ENCODE measurements at regions of chr22 and their contacts with region 1.

Region 1: GRCh38 chr22:39773976-39774539 is 119.5 kb downstream of the ENTHD1 start:
- DNase-seq: peak; percentile 50
- H3K4me3 Mint-ChIP-seq: no peak overlapping the region
- H3K27ac Mint-ChIP-seq: no peak overlapping the region
- H3K4me1 Mint-ChIP-seq: peaks cover 24% of the 10 kb centered on the region
- H3K27me3 Mint-ChIP-seq: no peaks in the 10 kb centered on the region

Region 2: DNA sequence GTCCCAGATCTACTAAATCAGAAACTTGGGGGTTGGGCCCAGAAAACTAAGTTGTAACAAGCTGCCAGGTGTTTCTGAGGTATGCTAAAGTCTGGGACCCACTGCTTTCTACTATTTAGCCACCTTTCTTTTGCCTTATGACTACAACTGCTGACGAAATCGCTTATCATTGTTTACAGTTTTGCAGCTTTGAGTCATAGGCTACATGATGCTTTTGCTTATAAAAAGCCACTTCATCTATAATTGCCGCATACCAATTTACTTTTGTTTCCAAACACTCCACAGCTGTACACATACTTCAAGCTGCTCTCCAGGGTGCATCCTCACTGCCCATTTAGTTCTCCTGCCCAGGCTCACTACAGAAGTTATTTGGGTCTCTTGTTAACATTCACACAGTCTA is 25.2 kb before region 1 on chr22:
- CTCF ChIA-PET with region 1: no interaction called
- POLR2A ChIA-PET with region 1: no interaction called
- intact Hi-C with region 1: loop called (anchors 2 kb)
- DNase-seq: no peak
- H3K4me3 Mint-ChIP-seq: no peak overlapping the region
- H3K27ac Mint-ChIP-seq: no peak overlapping the region
- H3K4me1 Mint-ChIP-seq: peaks cover 22% of the 10 kb centered on the region
- H3K27me3 Mint-ChIP-seq: no peaks in the 10 kb centered on the region

Region 3: DNA sequence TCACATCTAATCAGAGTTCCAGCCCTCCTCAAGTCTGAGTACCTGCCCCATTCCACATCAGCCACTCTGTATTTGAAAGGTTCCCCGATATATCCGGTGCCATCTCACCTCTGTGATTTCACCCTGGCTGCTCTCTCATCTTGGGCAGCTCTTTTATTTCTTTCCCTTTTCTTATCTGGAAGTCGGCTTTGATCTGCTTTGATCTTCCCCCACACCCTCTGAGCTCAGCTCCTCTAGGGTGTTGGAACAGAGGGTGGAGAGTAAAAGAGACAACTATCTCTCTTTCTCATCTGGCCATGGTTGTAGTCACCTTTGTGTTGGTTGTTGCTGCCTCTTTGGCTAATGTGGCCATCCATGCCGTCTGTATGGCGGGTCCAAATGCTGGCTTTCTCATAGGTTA is 11.2 kb after region 1 on chr22:
- CTCF ChIA-PET with region 1: no interaction called
- POLR2A ChIA-PET with region 1: no interaction called
- intact Hi-C with region 1: no loop called
- DNase-seq: peak; percentile 11
- H3K4me3 Mint-ChIP-seq: no peak overlapping the region
- H3K27ac Mint-ChIP-seq: no peak overlapping the region
- H3K4me1 Mint-ChIP-seq: peaks cover 5% of the 10 kb centered on the region
- H3K27me3 Mint-ChIP-seq: no peaks in the 10 kb centered on the region

Measured in activated CD4-positive, alpha-beta memory T cell treated with anti-CD3 and anti-CD28 coated beads for 36 hours (primary cell).